Activated CD4-positive, alpha-beta T cell treated with anti-CD3 and anti-CD28 coated beads for 36 hours (primary cell): ENCODE measurements at regions of chr17 and their contacts with region 1.

Region 1: GRCh38 chr17:4908301-4908700 is 5.4 kb upstream of the CHRNE start:
- DNase-seq: peak; percentile 38
- ATAC-seq: peak; percentile 27
- H3K4me3 Mint-ChIP-seq: no peak overlapping the region
- H3K27ac Mint-ChIP-seq: no peak overlapping the region
- H3K4me1 Mint-ChIP-seq: peaks cover 4% of the 10 kb centered on the region
- H3K27me3 Mint-ChIP-seq: peaks cover 3% of the 10 kb centered on the region

Region 2: GRCh38 chr17:4934173-4934979 is 26.1 kb after region 1 on chr17:
- CTCF ChIA-PET with region 1: interaction called, 10 read pairs
- POLR2A ChIA-PET with region 1: no interaction called
- intact Hi-C with region 1: loop called in 1 of 2 experiments (anchors 1 kb)
- DNase-seq: no peak
- ATAC-seq: peak; percentile 63
- H3K4me3 Mint-ChIP-seq: no peak overlapping the region
- H3K27ac Mint-ChIP-seq: peak overlapping the region; percentile 59
- H3K4me1 Mint-ChIP-seq: peaks cover 27% of the 10 kb centered on the region
- H3K27me3 Mint-ChIP-seq: no peaks in the 10 kb centered on the region

Region 3: DNA sequence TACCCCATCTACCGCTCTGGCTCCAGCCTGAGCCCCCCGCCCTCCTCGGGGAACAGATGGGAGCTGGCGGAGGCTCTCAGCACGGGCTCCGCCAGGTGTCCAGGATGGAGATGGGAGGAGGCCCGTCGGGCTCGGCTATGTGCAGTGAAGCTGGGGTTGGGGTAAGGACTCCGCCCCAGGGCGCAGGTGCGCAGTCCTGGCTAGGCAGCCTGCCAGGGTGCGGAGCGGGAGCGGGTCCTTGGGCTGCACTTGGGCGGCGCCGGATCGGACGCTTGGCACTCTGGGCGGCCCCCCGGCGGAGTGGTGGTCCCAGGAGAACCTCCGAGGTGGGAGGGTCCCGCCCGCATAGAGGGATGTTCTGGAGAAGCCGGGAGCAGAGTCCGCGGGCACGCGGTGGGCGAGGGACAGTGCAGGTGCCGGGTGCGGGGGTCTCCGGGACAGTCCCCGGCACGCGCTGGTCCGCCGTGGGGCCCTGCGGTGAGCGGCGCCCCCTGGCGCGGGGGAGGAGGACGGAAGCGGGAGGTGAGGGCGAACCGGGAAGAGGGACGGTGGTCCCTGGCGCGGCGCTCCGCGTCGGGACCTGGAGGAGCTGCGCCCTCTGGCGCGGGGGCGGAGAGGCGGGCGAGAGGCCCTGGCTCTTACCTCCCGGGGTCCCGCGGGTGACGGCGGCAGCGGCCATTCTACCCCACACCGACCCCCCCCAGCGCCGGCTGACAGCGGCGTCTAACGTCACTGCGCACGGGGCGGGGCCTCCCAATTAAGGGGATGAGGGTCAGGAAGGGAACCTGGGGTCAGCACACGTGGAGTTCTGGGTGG is 78.9 kb after region 1 on chr17 and contains the start of gene CAMTA2:
- CTCF ChIA-PET with region 1: interaction called, 3 read pairs
- POLR2A ChIA-PET with region 1: interaction called, 3 read pairs
- intact Hi-C with region 1: loop called in 1 of 2 experiments (anchors 1 kb)
- DNase-seq: peak; percentile 91
- ATAC-seq: peak; percentile 87
- H3K4me3 Mint-ChIP-seq: peak within 1 kb of the TSS; percentile 93
- H3K27ac Mint-ChIP-seq: peak within 1 kb of the TSS; percentile 91
- H3K4me1 Mint-ChIP-seq: peaks cover 33% of the 10 kb centered on the region
- H3K27me3 Mint-ChIP-seq: no peaks in the 10 kb centered on the region
- total RNA-seq, gene CAMTA2: 98.2 to 124 TPM

Region 4: DNA sequence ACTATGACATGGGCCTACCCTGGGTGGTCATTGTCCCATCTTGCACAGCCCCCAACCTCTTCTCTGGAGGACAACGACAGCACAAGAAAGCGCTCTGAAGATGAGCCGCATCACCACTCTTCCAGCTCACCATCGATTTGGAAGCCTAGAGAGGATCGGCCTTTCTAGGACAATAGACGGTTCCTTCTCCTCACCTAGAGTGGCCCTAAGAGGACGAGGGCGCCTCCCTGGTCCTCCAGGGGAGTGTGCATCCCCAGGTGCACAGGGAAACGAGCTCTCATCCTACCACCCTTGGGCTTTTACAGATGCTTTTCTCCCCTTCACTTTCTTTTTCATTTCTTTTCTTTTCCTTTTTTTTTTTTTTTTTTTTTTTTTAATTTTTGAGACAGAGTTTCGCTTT is 147.2 kb after region 1 on chr17:
- CTCF ChIA-PET with region 1: interaction called, 3 read pairs
- POLR2A ChIA-PET with region 1: no interaction called
- intact Hi-C with region 1: loop called in 1 of 2 experiments (anchors 5 kb)
- DNase-seq: no peak
- ATAC-seq: no peak
- H3K4me3 Mint-ChIP-seq: no peak overlapping the region
- H3K27ac Mint-ChIP-seq: no peak overlapping the region
- H3K4me1 Mint-ChIP-seq: no peaks in the 10 kb centered on the region
- H3K27me3 Mint-ChIP-seq: no peaks in the 10 kb centered on the region

Region 5: GRCh38 chr17:5065227-5065744 is 157.0 kb after region 1 on chr17:
- CTCF ChIA-PET with region 1: interaction called, 9 read pairs
- POLR2A ChIA-PET with region 1: no interaction called
- intact Hi-C with region 1: loop called (anchors 1 to 5 kb)
- DNase-seq: no peak
- ATAC-seq: no peak
- H3K4me3 Mint-ChIP-seq: no peak overlapping the region
- H3K27ac Mint-ChIP-seq: no peak overlapping the region
- H3K4me1 Mint-ChIP-seq: peaks cover 3% of the 10 kb centered on the region
- H3K27me3 Mint-ChIP-seq: no peaks in the 10 kb centered on the region